Adrenal gland (tissue), 19 donors: ENCODE measurements at regions of chr4 and their contacts with region 1.

Region 1: DNA sequence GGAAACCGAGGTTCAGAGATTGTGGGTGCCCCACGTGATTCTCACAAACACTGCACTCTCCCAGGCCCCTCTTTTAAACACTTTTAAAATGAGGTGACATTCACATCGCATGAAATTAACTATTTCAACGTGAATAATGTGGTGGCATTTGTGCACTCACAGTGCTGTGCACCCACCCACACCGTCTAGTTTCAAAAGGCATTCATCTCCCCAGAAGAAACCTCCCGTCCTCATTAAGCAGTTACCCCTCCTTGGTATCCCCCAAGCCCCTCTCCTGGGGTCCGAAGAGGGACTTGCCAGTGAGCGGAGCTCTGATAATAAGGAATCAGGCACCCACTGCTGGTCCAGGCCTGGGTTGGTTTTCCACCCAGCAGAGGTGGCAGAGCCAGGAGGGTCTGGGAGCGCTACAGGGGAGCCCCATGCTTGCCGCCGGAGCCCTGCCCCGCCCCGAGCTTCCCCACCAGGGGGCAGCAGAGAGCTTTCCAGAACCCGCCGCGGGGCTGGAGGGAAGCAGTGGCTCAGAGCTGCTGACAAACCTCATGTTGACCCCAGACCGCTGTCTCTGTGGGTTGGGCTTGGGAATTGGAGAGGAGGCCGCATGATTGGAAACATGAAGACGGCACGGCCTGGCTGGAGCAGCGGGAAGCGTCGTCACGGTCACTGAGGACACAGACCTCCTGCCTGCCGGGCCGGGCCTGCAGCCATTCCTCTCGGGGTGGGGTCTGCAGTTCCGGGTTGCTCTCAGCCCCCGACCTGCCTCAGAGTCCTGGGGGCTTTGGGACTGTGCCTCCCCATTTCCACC is 27.5 kb upstream of the HTRA3 start:
- DNase-seq: peak; percentile 82 to 93 (median 85)
- H3K4me3 ChIP-seq: no peak overlapping the region
- H3K27ac ChIP-seq: peak overlapping the region in 3 of 5 donors; percentile 4 to 59 (median 52)
- H3K4me1 ChIP-seq: no peaks in the 10 kb centered on the region
- H3K27me3 ChIP-seq: no peaks in the 10 kb centered on the region
- CTCF ChIP-seq: peak; percentile 82 to 99 (median 96)
- POLR2A ChIP-seq: no peak

Region 2: GRCh38 chr4:8403173-8403753 is 161.2 kb after region 1 on chr4:
- intact Hi-C with region 1: loop called (anchors 2 kb)
- DNase-seq: peak; percentile 87 to 93 (median 91)
- H3K4me3 ChIP-seq: no peak overlapping the region
- H3K27ac ChIP-seq: peak overlapping the region in 2 of 5 donors; percentile 6 to 71
- H3K4me1 ChIP-seq: peaks cover 0 to 15% of the 10 kb centered on the region in 2 donors
- H3K27me3 ChIP-seq: no peaks in the 10 kb centered on the region
- CTCF ChIP-seq: peak; percentile 89 to 96 (median 94)
- POLR2A ChIP-seq: no peak

Region 3: GRCh38 chr4:8594097-8595038 is 352.3 kb after region 1 on chr4:
- intact Hi-C with region 1: loop called in 1 of 2 experiments (anchors 10 kb)
- DNase-seq: peak; percentile 62 to 76 (median 70)
- H3K4me3 ChIP-seq: no peak overlapping the region
- H3K27ac ChIP-seq: no peak overlapping the region
- H3K4me1 ChIP-seq: no peaks in the 10 kb centered on the region
- H3K27me3 ChIP-seq: peaks cover 15% of the 10 kb centered on the region
- CTCF ChIP-seq: peak; percentile 55 to 72 (median 60)
- POLR2A ChIP-seq: no peak